ENCODE measurements at regions of chr3 and their contacts with region 1.

Region 1: DNA sequence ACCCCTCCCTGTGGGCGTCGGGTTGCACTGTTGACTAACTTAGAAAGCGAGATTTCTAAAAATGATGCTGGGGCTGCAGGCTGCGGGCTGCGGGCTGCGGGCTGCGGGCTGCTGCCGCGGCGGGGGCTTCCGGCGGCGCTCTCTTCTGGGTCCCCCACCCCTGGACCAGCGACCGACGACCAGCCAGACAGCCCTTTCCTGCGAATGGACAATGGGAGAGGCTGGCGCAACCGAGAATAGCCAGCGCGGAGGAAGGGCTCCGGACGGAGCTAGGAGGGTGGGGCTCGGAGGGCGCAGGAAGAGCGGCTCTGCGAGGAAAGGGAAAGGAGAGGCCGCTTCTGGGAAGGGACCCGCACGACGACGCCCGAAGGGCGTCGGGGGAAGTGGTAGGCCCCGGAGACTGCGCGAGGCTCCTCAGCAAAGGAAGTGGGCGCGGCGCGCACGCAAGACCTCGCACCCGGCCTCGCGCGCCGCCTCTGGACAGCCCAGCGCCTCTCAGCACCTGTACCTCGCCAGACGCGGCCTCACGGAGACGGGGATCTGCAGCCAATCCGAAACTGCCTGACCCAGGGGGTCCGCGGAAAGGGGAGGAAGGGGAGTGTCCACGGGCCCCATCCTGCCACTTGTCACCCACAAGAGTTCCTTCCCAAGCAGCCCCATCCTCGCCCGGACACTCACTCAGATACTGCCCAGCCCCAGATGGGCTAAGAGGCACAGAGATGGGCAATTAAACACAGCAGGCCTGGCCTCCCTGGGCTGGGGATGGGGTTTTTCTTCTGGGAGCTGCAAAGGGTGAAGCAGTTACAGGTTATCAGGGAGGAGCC is 70.7 kb downstream of the SLC12A8 start:
- DNase-seq: peak; percentile 56 to 66 (median 64)
- H3K4me3 ChIP-seq: peak overlapping the region; percentile 11 to 38
- H3K4me3 Mint-ChIP-seq: peak overlapping the region; percentile 65 to 86 (median 79)
- H3K27ac ChIP-seq: peak overlapping the region; percentile 29
- H3K27ac Mint-ChIP-seq: peak overlapping the region; percentile 64 to 77 (median 70)
- H3K4me1 ChIP-seq: peaks cover 21% of the 10 kb centered on the region
- H3K4me1 Mint-ChIP-seq: peaks cover 13 to 36% (median 24%) of the 10 kb centered on the region in 4 donors
- H3K27me3 ChIP-seq: no peaks in the 10 kb centered on the region
- H3K27me3 Mint-ChIP-seq: no peaks in the 10 kb centered on the region

Region 2: GRCh38 chr3:124928333-124929202 is 213.2 kb before region 1 on chr3:
- CTCF ChIA-PET with region 1: no interaction called
- POLR2A ChIA-PET with region 1: no interaction called
- intact Hi-C with region 1: loop called (anchors 1 kb)
- DNase-seq: peak; percentile 42 to 59 (median 50)
- H3K4me3 ChIP-seq: no peak overlapping the region
- H3K4me3 Mint-ChIP-seq: peak overlapping the region in 1 of 8 donors; percentile 23
- H3K27ac ChIP-seq: no peak overlapping the region
- H3K27ac Mint-ChIP-seq: peak overlapping the region in 1 of 7 donors; percentile 9
- H3K4me1 ChIP-seq: no peaks in the 10 kb centered on the region
- H3K4me1 Mint-ChIP-seq: peaks cover 0 to 2% (median 0%) of the 10 kb centered on the region in 4 donors
- H3K27me3 ChIP-seq: no peaks in the 10 kb centered on the region
- H3K27me3 Mint-ChIP-seq: peaks cover 7 to 9% of the 10 kb centered on the region in 2 donors

Region 3: DNA sequence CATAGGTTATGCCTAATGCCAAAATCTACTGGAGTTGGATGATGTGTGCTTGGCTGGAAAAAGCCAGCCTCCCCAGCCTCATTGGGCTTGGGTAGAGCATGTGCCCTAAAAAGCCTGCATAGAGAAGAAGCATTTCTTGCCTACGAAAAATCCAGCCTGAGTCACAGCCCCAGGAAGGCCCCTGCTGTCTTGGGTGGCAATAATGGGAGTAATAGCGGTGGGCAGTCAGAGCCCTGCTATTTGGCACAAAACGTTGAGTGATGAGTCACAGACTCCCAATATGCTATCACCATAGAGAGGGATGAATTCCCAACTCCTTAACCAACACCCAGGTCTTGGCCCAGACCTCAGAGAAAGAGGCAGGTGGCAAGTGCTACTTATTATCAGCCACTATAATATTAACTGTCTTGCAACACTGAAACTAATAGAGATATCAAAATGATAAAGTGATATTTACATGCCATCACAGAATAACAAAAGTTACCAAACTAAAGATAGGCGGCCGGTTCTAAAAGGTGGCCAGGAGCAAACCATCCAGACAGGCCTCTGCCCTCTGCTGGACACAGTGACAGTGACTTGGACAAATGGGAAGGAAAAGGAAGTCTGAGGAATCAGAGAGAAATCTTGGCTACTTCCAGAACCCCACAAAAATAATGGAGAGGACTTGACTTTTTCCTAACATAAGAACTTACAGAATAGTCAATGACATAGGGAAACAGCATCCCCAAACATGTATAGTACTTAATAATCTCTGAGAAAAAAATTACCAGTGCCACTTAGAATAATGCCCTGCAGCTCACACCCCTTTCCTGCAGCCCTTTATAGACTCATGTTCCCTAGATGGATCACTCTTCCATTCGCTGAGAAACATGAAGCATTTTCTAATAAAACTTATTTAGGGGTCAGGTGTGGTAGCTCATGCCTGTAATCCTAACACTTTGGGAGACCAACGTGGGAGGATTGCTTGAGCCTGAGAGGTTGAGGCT is 155.4 kb before region 1 on chr3:
- CTCF ChIA-PET with region 1: no interaction called
- POLR2A ChIA-PET with region 1: no interaction called
- intact Hi-C with region 1: loop called (anchors 2 kb)
- DNase-seq: no peak
- H3K4me3 ChIP-seq: no peak overlapping the region
- H3K4me3 Mint-ChIP-seq: no peak overlapping the region
- H3K27ac ChIP-seq: no peak overlapping the region
- H3K27ac Mint-ChIP-seq: peak overlapping the region in 1 of 7 donors; percentile 30
- H3K4me1 ChIP-seq: no peaks in the 10 kb centered on the region
- H3K4me1 Mint-ChIP-seq: peaks cover 0 to 4% (median 0%) of the 10 kb centered on the region in 4 donors
- H3K27me3 ChIP-seq: no peaks in the 10 kb centered on the region
- H3K27me3 Mint-ChIP-seq: no peaks in the 10 kb centered on the region

Region 4: DNA sequence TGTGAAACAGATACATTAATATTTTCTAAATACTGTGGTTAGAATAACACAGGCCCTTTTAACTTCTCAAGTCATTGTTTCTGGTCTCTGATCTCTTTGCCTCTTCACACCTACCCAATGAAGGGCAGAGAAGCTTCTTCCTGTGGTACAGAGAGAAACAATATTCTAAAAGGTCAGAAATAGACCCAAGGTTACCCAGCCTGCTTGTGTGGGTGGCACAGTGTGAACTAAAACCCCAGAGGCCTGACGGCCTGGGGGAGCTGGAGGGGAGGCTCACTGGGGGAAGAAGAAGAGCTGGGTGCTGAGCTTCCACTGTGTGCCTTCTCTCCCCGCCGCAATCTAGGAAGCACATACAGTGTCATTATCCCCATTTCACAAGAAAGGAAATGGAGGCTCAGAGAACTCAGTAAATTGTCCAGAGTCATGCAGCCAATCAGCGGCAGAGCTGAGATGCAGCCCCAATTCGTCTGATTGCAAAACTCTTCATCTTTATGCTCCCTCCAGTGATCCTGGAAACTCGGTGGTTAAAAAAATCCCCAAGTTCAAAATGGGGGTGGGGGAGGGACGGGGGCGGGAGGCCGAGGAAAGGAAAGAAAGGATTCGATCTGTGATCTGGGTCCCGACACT is 21.9 kb before region 1 on chr3:
- CTCF ChIA-PET with region 1: interaction called, 4 read pairs
- POLR2A ChIA-PET with region 1: interaction called, 3 read pairs
- intact Hi-C with region 1: loop called (anchors 1 kb)
- DNase-seq: peak in 1 of 5 donors; percentile 12
- H3K4me3 ChIP-seq: no peak overlapping the region
- H3K4me3 Mint-ChIP-seq: peak overlapping the region in 6 of 8 donors; percentile 53 to 75 (median 70)
- H3K27ac ChIP-seq: no peak overlapping the region
- H3K27ac Mint-ChIP-seq: peak overlapping the region; percentile 11 to 74 (median 46)
- H3K4me1 ChIP-seq: peaks cover 25% of the 10 kb centered on the region
- H3K4me1 Mint-ChIP-seq: peaks cover 16 to 30% (median 23%) of the 10 kb centered on the region in 4 donors
- H3K27me3 ChIP-seq: no peaks in the 10 kb centered on the region
- H3K27me3 Mint-ChIP-seq: no peaks in the 10 kb centered on the region

Region 5: DNA sequence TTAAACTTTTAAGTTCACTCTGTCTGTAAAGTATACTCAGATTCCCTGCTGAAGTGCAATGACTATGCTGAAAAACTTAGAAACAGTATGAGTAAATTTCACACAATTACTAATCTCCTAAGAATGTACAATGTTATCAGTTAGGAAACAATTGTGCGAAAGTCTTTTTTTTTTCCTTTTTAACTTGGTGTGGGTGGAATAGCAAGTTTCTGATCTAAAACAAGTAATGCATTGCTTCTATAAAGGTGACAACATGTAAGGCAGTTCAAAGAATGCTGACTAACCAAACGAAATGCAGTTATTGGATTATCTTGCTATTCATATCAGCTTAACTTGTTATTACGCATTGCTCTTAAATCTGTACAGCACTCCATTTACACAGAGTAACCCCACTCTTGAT is 90.1 kb after region 1 on chr3:
- CTCF ChIA-PET with region 1: no interaction called
- POLR2A ChIA-PET with region 1: no interaction called
- intact Hi-C with region 1: no loop called
- DNase-seq: no peak
- H3K4me3 ChIP-seq: no peak overlapping the region
- H3K4me3 Mint-ChIP-seq: no peak overlapping the region
- H3K27ac ChIP-seq: no peak overlapping the region
- H3K27ac Mint-ChIP-seq: no peak overlapping the region
- H3K4me1 ChIP-seq: no peaks in the 10 kb centered on the region
- H3K4me1 Mint-ChIP-seq: peaks cover 0 to 2% (median under 1%) of the 10 kb centered on the region in 4 donors
- H3K27me3 ChIP-seq: no peaks in the 10 kb centered on the region
- H3K27me3 Mint-ChIP-seq: no peaks in the 10 kb centered on the region

Measured in CD4-positive, alpha-beta memory T cell (primary cell).